ENCODE measurements at regions of chr17 and their contacts with region 1.

Region 1: GRCh38 chr17:67879662-67880061 is 54.4 kb downstream of the BPTF start:
- DNase-seq: no peak
- H3K4me3 ChIP-seq: no peak overlapping the region
- H3K27ac ChIP-seq: no peak overlapping the region
- H3K4me1 ChIP-seq: no peaks in the 10 kb centered on the region
- H3K27me3 ChIP-seq: no peaks in the 10 kb centered on the region
- CTCF ChIP-seq: no peak
- POLR2A ChIP-seq: no peak

Region 2: DNA sequence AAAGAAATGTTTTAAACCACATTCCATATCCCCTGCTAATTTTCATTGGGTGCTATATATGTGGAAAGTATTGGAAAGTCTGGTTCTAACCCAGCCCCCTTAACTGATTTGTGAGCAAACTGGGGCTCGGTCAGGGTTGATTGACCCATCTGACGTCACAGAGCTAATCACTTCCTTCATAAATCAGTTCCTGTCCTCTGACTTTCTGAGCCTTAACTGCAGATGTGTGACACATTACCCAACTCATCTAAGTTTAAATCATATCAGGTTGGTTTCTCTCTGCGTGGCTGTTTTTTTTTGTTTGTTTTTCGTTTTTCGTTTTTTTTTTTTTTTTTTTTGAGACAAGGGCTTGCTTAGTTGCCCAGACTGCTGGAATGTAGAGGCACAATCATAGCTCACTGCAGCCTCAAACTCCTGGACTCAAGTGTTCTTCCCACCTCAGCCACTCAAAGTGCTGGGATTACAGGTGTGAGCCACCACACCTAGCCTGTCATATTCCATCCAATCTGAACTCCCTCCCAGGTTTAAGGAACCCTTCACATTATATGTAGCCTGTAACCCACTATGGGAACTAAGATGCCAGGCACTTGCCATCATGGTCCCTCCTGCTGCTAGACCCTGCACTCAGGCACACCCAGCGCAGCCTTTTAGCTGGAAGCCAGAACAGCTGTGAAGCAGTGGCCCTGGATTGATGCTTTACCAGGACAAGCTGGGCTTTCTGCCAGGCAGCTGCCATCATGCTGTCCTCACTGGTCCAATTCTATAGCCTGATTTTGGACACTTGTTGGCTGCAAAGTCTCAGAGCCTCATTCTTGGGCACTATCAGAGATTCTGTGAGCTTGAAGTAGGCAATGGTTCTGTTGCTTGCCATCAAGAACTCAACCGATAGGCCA is 61.3 kb before region 1 on chr17:
- intact Hi-C with region 1: loop called in 1 of 2 experiments (anchors 10 kb)
- DNase-seq: peak in 2 of 7 donors; percentile 19 to 43
- H3K4me3 ChIP-seq: no peak overlapping the region
- H3K27ac ChIP-seq: no peak overlapping the region
- H3K4me1 ChIP-seq: no peaks in the 10 kb centered on the region
- H3K27me3 ChIP-seq: no peaks in the 10 kb centered on the region
- CTCF ChIP-seq: no peak
- POLR2A ChIP-seq: no peak